A673 (cell line): ENCODE measurements at regions of chr5 and their contacts with region 1.

Region 1: GRCh38 chr5:65481635-65482295 is at the start of gene ADAMTS6:
- DNase-seq: peak; percentile 94
- H3K4me3 ChIP-seq: peak within 1 kb of the TSS; percentile 57
- H3K27ac ChIP-seq: peak within 1 kb of the TSS; percentile 71
- H3K4me1 ChIP-seq: peaks cover 9% of the 10 kb centered on the region
- H3K27me3 ChIP-seq: no peaks in the 10 kb centered on the region
- CTCF ChIP-seq: no peak
- total RNA-seq, gene ADAMTS6: 2.6 and 2.8 TPM in 2 replicates

Region 2: DNA sequence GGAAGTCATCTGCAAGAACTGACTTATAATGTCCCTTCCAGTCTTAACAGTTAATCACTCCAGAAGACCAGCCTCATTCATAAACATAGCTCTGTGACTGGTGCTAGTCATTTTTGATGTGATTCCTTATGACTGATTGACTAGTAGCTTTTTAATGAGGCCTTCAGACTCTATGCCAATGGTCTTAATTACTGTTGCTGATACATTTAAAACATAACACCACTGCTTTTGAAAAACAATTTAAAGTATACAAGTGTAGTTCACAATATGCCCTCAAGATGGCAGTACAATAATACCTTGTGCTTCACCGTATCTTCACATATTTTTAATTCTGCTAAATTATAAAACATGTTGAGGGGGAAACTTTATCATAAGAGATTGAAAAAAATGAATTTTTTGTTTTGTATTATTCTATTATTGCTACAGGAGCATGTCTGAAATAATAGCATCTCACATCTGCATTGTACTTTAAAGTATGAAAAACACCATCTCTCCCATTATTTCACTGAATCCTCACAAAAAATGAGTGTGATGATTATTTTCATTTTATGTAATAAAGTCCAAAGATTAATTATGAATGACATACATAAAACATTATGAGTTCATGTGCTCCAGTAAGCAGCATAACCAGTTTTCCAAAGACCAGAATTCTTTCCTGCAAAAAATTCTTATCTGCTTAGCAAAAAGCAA is 846.6 kb before region 1 on chr5:
- CTCF ChIA-PET with region 1: no interaction called
- POLR2A ChIA-PET with region 1: no interaction called
- intact Hi-C with region 1: loop called (anchors 5 kb)
- DNase-seq: peak; percentile 83
- H3K4me3 ChIP-seq: no peak overlapping the region
- H3K27ac ChIP-seq: no peak overlapping the region
- H3K4me1 ChIP-seq: peaks cover 7% of the 10 kb centered on the region
- H3K27me3 ChIP-seq: no peaks in the 10 kb centered on the region
- CTCF ChIP-seq: peak; percentile 84

Region 3: DNA sequence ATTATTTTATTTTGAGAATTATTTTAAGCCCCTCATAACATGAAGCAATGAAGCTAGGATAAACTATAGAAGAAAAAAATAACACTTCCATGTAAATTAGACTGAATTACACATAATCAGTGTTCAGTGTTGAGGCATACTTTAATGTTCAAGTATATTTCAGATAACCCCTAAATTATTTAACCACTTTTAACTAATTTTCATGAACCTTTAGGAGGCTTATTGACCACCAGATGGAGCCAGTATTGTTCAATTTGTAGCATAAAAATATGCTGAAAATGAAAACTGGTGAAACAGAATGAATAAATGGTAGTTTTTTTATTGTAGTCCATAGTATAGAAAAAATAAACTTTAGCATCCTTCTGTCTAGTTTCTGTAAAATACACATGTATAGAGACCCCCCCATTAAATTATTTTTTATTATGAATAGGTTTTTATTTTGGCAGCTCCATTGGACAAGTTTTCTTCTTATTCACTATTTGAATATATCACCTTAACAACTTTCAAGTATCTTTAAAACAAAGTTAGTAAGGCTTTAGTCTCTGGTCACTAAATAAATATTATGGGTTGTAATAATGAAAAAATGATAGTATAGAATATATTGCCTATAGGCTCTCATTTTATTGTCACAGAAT is 522.9 kb before region 1 on chr5:
- CTCF ChIA-PET with region 1: interaction called, 4 read pairs
- POLR2A ChIA-PET with region 1: no interaction called
- intact Hi-C with region 1: loop called (anchors 2 kb)
- DNase-seq: peak; percentile 49
- H3K4me3 ChIP-seq: no peak overlapping the region
- H3K27ac ChIP-seq: no peak overlapping the region
- H3K4me1 ChIP-seq: no peaks in the 10 kb centered on the region
- H3K27me3 ChIP-seq: no peaks in the 10 kb centered on the region
- CTCF ChIP-seq: peak; percentile 67

Region 4: DNA sequence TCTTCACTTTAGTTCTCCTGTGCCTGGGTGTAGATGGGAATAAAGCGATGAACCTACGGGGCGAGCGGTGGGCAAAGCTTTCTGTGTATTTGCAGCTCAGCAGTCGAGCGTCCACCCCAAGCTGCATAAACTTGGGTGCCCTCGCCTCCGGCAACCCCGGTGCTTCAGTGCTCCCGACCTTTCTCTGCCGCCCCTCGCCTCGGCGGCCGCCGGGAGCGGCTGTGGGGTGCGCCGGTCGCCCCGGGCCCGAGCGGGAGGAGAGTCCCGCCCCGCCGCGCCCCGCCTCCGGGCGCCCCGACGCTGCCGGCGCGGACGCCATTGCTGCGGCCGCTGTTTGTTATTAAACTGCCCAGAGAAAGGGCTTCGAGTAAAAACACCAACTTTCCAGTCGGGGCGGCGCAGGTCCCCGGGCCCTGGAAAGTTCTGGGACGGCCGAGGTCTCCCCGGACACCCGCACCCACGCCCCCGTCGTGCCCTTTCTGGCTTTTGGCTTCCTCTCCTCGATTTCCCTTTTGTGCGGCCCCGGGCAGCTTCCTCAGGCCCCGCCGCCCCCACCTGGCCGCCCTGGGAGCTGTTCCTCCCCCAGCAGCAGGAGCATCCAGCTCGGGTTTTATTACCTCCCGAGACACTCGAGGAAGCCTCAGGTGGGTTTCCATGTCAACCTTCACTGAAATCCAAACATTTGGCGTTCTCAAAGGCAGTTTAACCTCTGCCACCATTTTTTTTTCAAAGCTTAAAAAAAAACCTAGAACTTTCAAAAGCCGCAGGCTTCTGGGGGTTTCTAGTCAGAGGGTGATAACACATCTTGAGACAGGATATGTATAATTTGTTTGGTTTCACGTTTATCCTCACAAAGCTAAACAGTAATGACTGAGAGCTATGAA is 378.7 kb before region 1 on chr5:
- CTCF ChIA-PET with region 1: interaction called, 4 read pairs
- POLR2A ChIA-PET with region 1: no interaction called
- intact Hi-C with region 1: loop called (anchors 5 kb)
- DNase-seq: peak; percentile 34
- H3K4me3 ChIP-seq: peak overlapping the region; percentile 50
- H3K27ac ChIP-seq: peak overlapping the region; percentile 58
- H3K4me1 ChIP-seq: peaks cover 6% of the 10 kb centered on the region
- H3K27me3 ChIP-seq: no peaks in the 10 kb centered on the region
- CTCF ChIP-seq: peak; percentile 33; the same call in 1 of the 2 replicates

Region 5: DNA sequence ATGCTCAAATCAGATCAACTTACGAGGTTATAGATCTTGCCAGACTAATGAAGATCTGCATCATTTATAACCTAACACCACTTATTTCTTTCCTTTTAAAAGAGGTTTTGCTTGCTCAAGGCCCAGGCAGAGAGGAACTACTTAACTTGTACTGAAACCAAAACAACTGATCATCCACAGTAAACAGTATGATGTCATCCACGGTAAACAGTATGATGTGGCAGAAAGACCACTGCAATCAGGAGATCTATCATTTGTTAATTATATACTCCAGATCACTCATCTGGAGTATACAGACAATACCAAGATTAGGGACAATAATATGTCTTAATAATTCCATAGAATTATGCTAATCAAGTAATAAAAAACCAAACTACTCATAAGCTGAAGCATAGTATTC is 116.9 kb before region 1 on chr5:
- CTCF ChIA-PET with region 1: interaction called, 10 read pairs
- POLR2A ChIA-PET with region 1: no interaction called
- intact Hi-C with region 1: no loop called
- DNase-seq: peak; percentile 5
- H3K4me3 ChIP-seq: no peak overlapping the region
- H3K27ac ChIP-seq: no peak overlapping the region
- H3K4me1 ChIP-seq: no peaks in the 10 kb centered on the region
- H3K27me3 ChIP-seq: no peaks in the 10 kb centered on the region
- CTCF ChIP-seq: no peak